Endothelial cell of umbilical vein (primary cell): ENCODE measurements at regions of chr6 and their contacts with region 1.

Region 1: DNA sequence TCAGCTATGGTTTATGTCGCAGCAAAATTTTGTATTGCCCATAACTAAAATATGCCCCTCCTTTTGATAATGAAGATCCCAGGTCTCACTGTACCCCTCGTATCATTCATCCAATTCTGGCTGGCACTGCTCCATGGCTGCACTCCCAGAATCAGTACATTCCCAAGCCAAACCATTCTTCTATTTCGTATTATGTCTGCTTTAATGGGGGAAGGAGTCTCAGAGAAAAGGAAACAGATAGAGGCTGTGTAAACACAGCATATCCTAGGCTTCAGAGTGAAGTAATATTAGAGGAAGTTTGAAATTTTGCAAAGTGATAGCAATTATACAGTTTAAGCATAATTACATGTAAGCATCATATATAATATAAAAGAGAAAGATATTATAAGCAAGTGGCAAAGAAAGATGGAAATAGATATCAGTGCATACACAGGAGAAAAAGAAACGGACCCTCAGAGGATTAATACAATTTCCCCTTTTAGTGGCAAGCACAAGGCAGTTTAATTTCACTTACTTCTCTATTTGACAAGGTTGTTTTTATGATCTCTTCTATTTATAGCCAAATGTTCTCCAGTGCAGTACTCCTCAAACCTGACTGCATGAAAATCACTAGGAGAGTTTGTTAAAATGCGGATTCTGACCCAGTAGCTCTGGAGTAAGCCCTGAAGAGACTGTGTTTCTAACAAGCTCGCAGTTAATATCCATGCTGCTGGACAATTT is 56.5 kb upstream of the TENT5A start:
- DNase-seq: peak; percentile 93
- H3K4me3 ChIP-seq: peak overlapping the region in 2 of 3 experiments; percentile 10 to 40
- H3K27ac ChIP-seq: peak overlapping the region; percentile 78
- H3K4me1 ChIP-seq: peaks cover 27% of the 10 kb centered on the region
- H3K27me3 ChIP-seq: no peaks in the 10 kb centered on the region
- CTCF ChIP-seq: no peak
- POLR2A ChIP-seq: peak; percentile 37

Region 2: DNA sequence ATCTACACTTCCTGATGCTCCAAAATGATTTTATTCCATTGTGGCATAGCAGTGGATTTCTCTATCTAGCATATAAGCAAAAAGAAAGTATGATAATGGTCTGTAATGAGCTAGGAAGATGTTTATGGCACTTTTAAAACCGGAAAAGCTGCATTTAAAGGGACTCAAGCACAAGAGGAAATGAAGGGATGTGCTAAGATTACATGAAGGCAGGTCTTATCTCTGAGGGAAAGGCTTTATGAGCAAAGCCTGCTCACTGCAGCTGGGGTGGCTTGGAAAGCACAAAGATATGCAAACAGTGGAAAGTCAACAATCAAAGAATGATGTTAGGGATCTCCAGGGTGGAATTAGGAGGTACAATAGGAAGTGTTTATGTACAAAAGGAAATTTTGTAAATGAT is 194.7 kb before region 1 on chr6:
- CTCF ChIA-PET with region 1: no interaction called
- POLR2A ChIA-PET with region 1: no interaction called
- dilution Hi-C with region 1: no loop called
- intact Hi-C with region 1: loop called (anchors 2 kb)
- DNase-seq: peak; percentile 77
- H3K4me3 ChIP-seq: peak overlapping the region in 1 of 3 experiments; percentile 8
- H3K27ac ChIP-seq: peak overlapping the region; percentile 76
- H3K4me1 ChIP-seq: peaks cover 22% of the 10 kb centered on the region
- H3K27me3 ChIP-seq: no peaks in the 10 kb centered on the region
- CTCF ChIP-seq: no peak
- POLR2A ChIP-seq: no peak

Region 3: DNA sequence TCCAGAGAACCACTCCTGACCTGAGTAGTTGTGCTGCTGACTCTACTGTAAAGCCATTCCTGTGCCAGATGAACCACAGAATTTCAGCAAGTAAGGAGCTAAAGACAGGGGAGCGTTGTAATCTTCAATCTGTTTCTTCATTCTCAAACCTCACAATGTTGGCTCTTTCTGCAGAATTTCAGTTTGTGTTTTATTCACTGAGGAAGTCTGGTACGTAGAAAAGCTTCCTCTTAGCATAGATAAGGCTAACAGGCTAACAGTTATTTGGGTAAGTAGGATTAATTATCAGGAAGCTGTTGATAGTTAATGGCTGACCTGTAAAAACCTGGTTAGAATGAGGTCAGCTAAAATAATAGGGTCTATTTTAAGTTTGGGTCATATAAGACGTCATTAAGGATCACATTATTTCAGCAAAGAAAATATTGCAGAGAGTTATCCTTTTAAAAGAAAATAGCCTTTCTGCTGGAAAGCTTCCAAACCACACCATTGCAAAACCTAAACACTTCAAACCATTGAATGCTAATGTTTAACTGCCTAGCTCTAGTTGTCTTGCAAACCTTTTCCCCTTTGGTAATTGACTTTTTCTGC is 42.4 kb before region 1 on chr6:
- CTCF ChIA-PET with region 1: interaction called, 8 read pairs
- POLR2A ChIA-PET with region 1: no interaction called
- dilution Hi-C with region 1: no loop called
- intact Hi-C with region 1: loop called (anchors 2 kb)
- DNase-seq: peak; percentile 92
- H3K4me3 ChIP-seq: no peak overlapping the region
- H3K27ac ChIP-seq: no peak overlapping the region
- H3K4me1 ChIP-seq: peaks cover 12% of the 10 kb centered on the region
- H3K27me3 ChIP-seq: peaks cover 28 to 46% of the 10 kb centered on the region in 2 experiments
- CTCF ChIP-seq: no peak
- POLR2A ChIP-seq: no peak

Region 4: DNA sequence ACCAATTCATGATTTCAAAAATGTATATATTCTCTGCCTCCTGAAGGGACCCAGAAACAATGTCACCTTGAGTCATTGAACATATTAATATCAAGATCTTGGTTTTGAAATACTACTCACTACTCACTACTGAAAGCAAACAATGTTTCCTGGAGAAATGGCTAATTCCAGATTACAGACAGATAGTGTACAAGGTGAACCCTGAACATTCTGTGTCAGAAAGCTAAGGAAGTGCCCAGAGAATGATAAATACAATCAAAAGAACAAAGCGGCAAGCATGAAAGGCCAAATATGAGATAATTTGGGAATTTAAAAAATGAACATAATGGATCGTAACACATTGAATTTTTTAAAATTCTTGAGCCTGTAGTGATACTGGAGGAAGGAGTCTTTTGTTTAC is 45.0 kb after region 1 on chr6:
- CTCF ChIA-PET with region 1: no interaction called
- POLR2A ChIA-PET with region 1: no interaction called
- dilution Hi-C with region 1: no loop called
- intact Hi-C with region 1: loop called (anchors 2 kb)
- DNase-seq: no peak
- H3K4me3 ChIP-seq: no peak overlapping the region
- H3K27ac ChIP-seq: peak overlapping the region; percentile 34
- H3K4me1 ChIP-seq: peaks cover 16% of the 10 kb centered on the region
- H3K27me3 ChIP-seq: no peaks in the 10 kb centered on the region
- CTCF ChIP-seq: no peak
- POLR2A ChIP-seq: no peak

Region 5: DNA sequence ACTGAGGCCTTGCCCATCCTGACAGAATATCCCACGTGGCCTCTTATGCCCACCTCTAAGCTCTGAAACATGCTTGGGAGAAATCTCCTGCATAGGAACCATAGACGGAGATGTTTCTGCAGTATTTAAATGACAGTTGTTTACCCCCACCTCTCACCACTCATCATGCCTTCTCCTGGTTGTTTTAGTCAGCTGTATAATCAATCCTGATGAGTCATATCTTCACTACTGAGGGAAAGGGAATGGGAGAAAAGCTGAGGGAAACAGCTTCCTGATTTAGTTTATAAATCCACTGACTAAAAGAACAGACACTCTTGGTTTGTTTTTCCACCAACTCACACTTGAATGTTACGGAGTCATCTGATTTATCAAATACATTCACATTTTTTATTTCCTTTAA is 56.7 kb after region 1 on chr6:
- CTCF ChIA-PET with region 1: interaction called, 5 read pairs
- POLR2A ChIA-PET with region 1: no interaction called
- dilution Hi-C with region 1: no loop called
- intact Hi-C with region 1: loop called (anchors 2 kb)
- DNase-seq: peak; percentile 88
- H3K4me3 ChIP-seq: no peak overlapping the region
- H3K27ac ChIP-seq: peak overlapping the region; percentile 59
- H3K4me1 ChIP-seq: peaks cover 27% of the 10 kb centered on the region
- H3K27me3 ChIP-seq: no peaks in the 10 kb centered on the region
- CTCF ChIP-seq: no peak
- POLR2A ChIP-seq: no peak